HEK293T (cell line): ENCODE measurements at regions of chr15 and their contacts with region 1.

Region 1: GRCh38 chr15:65304389-65305144 is at the start of gene RNU5B-1:
- DNase-seq: peak; percentile 77

Region 2: DNA sequence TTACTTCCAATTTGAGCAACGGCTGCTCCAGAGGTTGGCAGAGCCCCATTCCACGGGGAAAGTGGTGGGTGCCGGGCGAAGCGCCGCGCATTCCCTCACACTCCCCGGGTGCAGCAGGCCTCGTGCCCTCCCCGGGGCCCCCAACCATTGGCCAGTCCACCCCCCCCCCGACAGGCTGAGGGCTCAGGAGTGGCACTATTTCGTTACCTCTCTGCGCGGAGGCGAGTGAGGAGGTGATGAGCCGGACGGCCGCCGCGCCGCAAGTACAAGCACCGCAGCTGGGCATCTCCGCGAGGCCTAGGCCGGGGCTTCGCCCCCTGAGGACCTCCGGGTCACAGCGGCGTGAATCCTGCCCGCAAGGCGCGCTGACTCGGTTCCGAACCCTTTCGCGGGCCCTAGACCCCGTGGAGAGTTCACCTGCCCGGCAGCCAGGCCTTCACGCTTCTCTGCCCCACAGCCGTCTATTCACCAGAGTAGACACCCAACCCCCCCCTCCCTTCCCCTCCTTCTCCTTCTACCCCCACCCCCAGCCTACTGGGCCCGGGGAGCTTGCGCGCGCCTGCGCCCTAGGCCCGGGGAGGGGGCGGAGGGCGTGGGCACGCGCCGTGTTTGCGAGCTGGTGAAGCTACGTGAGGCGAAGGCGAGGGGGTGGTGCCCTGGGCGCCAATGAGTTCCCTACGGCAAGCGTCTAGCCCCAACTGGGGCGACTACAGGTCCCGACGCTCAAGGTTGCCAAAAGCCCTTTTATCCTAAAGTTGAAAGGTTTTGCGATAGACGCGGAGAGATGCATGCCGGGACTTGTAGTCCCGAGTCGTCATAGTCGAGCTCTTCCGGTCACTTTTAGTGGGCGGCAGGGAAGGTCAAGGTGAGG is 119.5 kb before region 1 on chr15 and contains the start of gene CLPX:
- CTCF ChIA-PET with region 1: no interaction called
- POLR2A ChIA-PET with region 1: interaction called, 32 read pairs
- DNase-seq: peak; percentile 82

Region 3: GRCh38 chr15:65292938-65293518 is 11.5 kb before region 1 on chr15:
- CTCF ChIA-PET with region 1: interaction called, 4 read pairs
- POLR2A ChIA-PET with region 1: interaction called, 71 read pairs
- DNase-seq: no peak

Region 4: GRCh38 chr15:65377104-65377975 is 72.8 kb after region 1 on chr15:
- CTCF ChIA-PET with region 1: no interaction called
- POLR2A ChIA-PET with region 1: interaction called, 35 read pairs
- DNase-seq: peak; percentile 53

Region 5: GRCh38 chr15:65400760-65401610 is 96.4 kb after region 1 on chr15:
- CTCF ChIA-PET with region 1: no interaction called
- POLR2A ChIA-PET with region 1: interaction called, 10 read pairs
- DNase-seq: peak; percentile 91